ENCODE measurements at regions of chr4 and their contacts with region 1.

Region 1: DNA sequence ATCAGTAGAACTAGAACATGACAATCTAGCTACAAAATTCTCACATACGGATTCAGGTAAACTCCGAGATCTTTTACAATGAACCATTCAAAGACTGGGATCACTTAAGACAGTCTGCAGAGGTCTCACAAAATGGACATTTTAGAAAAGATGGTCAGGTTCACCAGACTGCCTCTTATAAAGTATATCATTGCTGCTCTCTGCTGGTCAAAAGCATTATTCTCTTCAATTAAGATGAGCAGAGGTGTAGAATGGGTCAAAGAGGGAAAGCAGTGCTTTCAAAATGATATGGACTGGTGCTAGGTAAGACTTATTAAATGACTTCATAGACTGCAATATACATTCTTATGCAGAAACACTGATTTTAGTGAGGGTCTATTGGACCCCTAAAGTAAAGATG is 434.7 kb downstream of the PACRGL start:
- DNase-seq: peak; percentile 62
- H3K4me3 ChIP-seq: no peak overlapping the region
- H3K27ac ChIP-seq: no peak overlapping the region
- H3K4me1 ChIP-seq: peaks cover 18% of the 10 kb centered on the region
- H3K27me3 ChIP-seq: no peaks in the 10 kb centered on the region
- CTCF ChIP-seq: peak; percentile 29 to 30
- POLR2A ChIP-seq: no peak

Region 2: DNA sequence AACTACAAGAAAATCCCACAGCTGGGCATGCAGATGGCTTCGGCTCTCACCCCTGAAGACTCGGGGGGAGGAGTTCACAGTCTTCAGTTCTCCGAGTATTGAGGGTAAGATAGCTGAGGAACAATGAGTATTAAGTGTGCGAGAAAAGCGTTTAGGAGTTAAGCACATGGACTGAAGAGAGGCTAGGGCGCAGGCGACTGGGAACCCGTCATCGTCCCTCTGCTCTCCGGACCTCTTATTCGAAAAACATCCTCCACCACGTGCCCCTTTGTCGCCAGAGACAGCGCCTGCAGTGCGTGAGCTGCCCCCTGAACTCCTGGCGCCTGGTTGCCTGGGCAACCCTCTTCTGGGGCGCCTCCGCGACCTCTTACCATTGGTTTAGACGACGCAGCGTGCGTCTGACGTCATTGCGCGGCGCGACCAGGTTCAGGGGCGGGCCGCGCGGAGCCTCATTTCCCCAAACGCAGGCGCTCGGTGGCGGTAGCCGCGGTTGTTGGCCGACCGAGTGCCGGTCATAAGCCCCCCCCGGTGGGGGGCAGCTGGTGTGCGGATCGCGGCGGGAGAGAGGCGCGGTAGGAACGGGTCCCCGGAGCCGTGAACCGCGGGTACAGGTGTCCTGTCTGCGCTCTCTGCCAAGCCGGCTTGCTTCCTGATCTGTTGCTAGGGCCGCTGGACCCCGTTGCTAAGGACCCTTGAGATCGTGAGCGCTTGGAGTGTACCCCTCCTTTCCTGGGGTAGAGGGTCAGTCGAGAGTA is 434.8 kb before region 1 on chr4 and contains the start of gene PACRGL:
- CTCF ChIA-PET with region 1: no interaction called
- POLR2A ChIA-PET with region 1: no interaction called
- dilution Hi-C with region 1: no loop called
- intact Hi-C with region 1: loop called (anchors 10 kb)
- DNase-seq: peak; percentile 94
- H3K4me3 ChIP-seq: peak within 1 kb of the TSS; percentile 88 to 92 (median 91)
- H3K27ac ChIP-seq: peak within 1 kb of the TSS; percentile 82
- H3K4me1 ChIP-seq: peaks cover 18% of the 10 kb centered on the region
- H3K27me3 ChIP-seq: peaks cover 0 to 3% of the 10 kb centered on the region in 2 experiments
- CTCF ChIP-seq: no peak
- POLR2A ChIP-seq: peak; percentile 43
- total RNA-seq, gene PACRGL: 19.2 and 20.2 TPM in 2 replicates

Measured in endothelial cell of umbilical vein (primary cell).